ENCODE measurements at regions of chr16 and their contacts with region 1.

Region 1: GRCh38 chr16:2095315-2095853 is 40.3 kb downstream of the PKD1 start:
- DNase-seq: no peak
- H3K4me3 ChIP-seq: no peak overlapping the region
- H3K27ac ChIP-seq: no peak overlapping the region
- H3K4me1 ChIP-seq: peaks cover 0 to 32% (median 25%) of the 10 kb centered on the region in 4 donors
- H3K27me3 ChIP-seq: no peaks in the 10 kb centered on the region
- CTCF ChIP-seq: no peak
- EP300 ChIP-seq: no peak
- POLR2A ChIP-seq: no peak

Region 2: DNA sequence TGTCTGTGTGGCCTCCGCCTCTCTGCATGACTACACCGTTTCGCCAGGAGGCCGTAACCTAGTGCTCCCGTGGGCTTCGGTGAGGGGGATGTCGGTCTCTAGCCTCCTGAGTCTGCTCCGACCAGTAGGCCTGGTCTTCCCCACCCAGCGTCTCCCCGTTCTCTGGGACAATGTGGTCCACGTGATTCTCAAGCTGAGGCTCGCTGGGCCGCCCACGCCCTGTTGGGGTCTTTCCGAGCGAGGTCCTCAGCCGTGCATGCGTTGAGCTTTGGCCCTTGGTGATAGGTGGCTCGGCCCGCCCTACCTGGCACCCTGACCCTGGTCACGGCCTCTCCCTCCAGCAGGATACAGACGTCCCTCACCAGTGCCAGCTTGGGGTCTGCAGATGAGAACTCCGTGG is 16.7 kb before region 1 on chr16:
- intact Hi-C with region 1: loop called (anchors 2 kb)
- DNase-seq: no peak
- H3K4me3 ChIP-seq: no peak overlapping the region
- H3K27ac ChIP-seq: no peak overlapping the region
- H3K4me1 ChIP-seq: peaks cover 16 to 27% (median 26%) of the 10 kb centered on the region in 4 donors
- H3K27me3 ChIP-seq: no peaks in the 10 kb centered on the region
- CTCF ChIP-seq: no peak
- EP300 ChIP-seq: no peak
- POLR2A ChIP-seq: no peak